Body of pancreas (tissue), 4 donors: ENCODE measurements at regions of chr7 and their contacts with region 1.

Region 1: DNA sequence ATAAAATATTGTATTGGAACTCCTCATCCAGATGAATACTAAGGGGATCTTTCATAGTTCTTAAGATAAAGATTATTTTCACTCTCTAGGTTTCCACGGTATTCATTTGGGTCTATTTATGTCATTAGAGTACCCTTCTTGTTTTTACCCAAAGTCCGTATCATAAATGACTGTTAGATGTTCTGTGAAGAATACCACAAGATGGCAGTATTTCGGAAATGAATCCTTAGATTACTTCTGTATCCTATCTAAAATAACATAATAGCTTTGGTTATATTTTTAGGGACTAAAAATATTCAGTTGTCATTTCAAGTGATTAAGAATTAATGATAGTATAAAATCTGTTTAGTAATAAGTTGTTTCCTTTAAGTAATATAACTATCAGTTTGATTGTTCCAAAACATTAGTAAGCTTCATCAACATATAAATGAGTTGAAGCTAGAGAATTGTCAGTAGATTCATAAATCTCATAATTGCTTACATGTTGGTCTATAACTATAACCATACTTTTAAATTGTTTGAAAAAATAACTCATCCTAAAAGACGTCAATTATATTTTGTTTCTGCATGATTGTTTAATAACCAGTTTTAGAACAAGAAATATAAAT is 337.5 kb upstream of the KCND2 start:
- DNase-seq: no peak
- ATAC-seq: peak; percentile 56
- H3K4me3 ChIP-seq: no peak overlapping the region
- H3K27ac ChIP-seq: no peak overlapping the region
- H3K4me1 ChIP-seq: no peaks in the 10 kb centered on the region
- H3K27me3 ChIP-seq: peaks cover 0 to 6% of the 10 kb centered on the region in 2 donors
- CTCF ChIP-seq: peak in 6 of 7 experiments; percentile 30 to 47 (median 40)
- POLR2A ChIP-seq: no peak

Region 2: GRCh38 chr7:120272261-120272660 is 336.7 kb after region 1 on chr7:
- intact Hi-C with region 1: loop called (anchors 10 kb)
- DNase-seq: peak in 2 of 4 donors; percentile 25 to 28
- ATAC-seq: peak; percentile 63
- H3K4me3 ChIP-seq: peak overlapping the region in 1 of 2 donors; percentile 9
- H3K27ac ChIP-seq: no peak overlapping the region
- H3K4me1 ChIP-seq: peaks cover 5% of the 10 kb centered on the region
- H3K27me3 ChIP-seq: no peaks in the 10 kb centered on the region
- CTCF ChIP-seq: peak; percentile 18 to 59 (median 54)
- POLR2A ChIP-seq: no peak